CD8-positive, alpha-beta T cell (primary cell): ENCODE measurements at regions of chr1 and their contacts with region 1.

Region 1: DNA sequence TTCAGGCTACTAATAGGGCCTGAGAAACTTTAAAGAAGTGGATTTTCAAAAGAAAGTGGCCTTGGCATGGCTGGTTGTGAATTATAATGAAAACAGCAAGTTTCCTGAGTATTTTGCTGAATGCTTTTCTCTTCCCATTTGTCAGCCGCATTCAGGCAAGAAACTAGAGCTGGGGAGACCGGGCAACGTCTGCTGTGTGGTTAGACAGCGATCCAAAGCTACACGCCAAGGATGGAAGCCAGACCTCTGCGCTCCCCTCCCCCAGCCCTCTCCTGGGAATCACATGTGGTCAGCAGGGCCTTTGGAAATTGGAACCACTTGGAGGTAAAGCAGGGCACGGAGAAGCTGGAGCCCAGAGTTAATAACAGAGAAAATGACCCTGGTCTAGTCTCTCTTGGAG is 114.1 kb upstream of the CD34 start:
- DNase-seq: no peak
- ATAC-seq: no peak
- H3K4me3 ChIP-seq: no peak overlapping the region
- H3K4me3 Mint-ChIP-seq: no peak overlapping the region
- H3K27ac ChIP-seq: no peak overlapping the region
- H3K27ac Mint-ChIP-seq: no peak overlapping the region
- H3K4me1 ChIP-seq: no peaks in the 10 kb centered on the region
- H3K4me1 Mint-ChIP-seq: no peaks in the 10 kb centered on the region
- H3K27me3 ChIP-seq: no peaks in the 10 kb centered on the region
- H3K27me3 Mint-ChIP-seq: no peaks in the 10 kb centered on the region
- CTCF ChIP-seq: no peak

Region 2: DNA sequence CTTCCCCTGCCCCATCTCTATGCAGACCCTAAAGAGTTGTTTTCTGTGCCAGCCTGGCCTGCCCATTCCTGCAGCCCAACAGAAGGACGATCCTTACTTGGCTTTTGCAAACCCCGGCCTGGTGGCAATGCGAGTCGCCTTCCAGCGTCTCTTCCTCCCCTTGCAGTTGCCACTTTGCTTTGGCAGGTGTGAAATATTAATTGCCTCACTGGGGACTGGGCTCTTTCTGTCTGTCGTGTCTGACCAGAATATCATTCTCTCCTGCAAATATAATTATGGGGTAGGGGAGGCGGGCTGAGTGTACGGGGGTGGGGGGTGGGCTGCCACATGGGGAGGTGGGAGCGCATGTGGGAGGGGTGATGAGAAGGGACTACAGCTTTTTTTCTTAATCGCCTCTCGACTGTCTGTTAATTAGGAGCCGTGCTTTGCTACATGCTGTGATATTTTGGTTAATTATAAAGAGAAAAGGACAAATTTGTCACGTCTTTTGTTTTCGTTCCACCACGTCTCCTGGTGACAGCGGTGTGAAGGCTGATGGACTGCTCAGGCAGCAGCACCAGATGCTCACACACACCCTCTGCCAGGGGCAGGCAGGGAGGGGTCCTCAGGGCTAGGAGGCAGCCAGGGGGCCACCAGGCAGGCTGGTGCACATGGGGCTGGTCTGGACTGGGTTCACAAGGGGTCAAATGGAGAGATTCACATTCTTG is 34.0 kb before region 1 on chr1:
- CTCF ChIA-PET with region 1: interaction called, 7 read pairs
- POLR2A ChIA-PET with region 1: no interaction called
- intact Hi-C with region 1: loop called in 1 of 2 experiments (anchors 1 kb)
- DNase-seq: no peak
- ATAC-seq: no peak
- H3K4me3 ChIP-seq: no peak overlapping the region
- H3K4me3 Mint-ChIP-seq: no peak overlapping the region
- H3K27ac ChIP-seq: no peak overlapping the region
- H3K27ac Mint-ChIP-seq: no peak overlapping the region
- H3K4me1 ChIP-seq: no peaks in the 10 kb centered on the region
- H3K4me1 Mint-ChIP-seq: no peaks in the 10 kb centered on the region
- H3K27me3 ChIP-seq: no peaks in the 10 kb centered on the region
- H3K27me3 Mint-ChIP-seq: peaks cover 22% of the 10 kb centered on the region
- CTCF ChIP-seq: no peak

Region 3: DNA sequence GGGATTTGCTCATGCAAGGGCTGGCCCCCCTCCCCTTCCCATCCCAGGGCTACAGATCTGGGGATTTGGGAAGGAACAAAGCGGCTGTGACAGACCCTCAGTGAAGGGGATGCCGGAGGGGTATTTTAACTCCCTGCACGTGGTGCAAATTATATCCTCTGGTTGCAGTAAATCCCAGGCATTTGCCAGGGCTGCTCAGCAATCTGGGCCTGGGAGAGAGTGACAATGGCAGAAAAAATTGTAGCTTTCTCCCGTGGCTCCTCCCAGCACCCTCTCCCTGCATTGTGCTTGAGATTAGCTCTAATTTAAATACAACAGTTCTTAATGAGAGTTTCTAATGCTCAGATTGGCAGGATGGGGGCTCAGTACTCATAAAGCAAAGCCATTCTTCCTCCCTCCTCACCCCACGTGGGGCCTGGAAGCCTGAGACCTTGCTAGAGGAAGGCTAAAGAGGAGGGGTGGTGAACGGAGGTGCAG is 15.8 kb after region 1 on chr1:
- CTCF ChIA-PET with region 1: interaction called, 19 read pairs
- POLR2A ChIA-PET with region 1: no interaction called
- intact Hi-C with region 1: no loop called
- DNase-seq: no peak
- ATAC-seq: no peak
- H3K4me3 ChIP-seq: no peak overlapping the region
- H3K4me3 Mint-ChIP-seq: no peak overlapping the region
- H3K27ac ChIP-seq: no peak overlapping the region
- H3K27ac Mint-ChIP-seq: no peak overlapping the region
- H3K4me1 ChIP-seq: no peaks in the 10 kb centered on the region
- H3K4me1 Mint-ChIP-seq: no peaks in the 10 kb centered on the region
- H3K27me3 ChIP-seq: no peaks in the 10 kb centered on the region
- H3K27me3 Mint-ChIP-seq: peaks cover 4% of the 10 kb centered on the region
- CTCF ChIP-seq: no peak

Region 4: DNA sequence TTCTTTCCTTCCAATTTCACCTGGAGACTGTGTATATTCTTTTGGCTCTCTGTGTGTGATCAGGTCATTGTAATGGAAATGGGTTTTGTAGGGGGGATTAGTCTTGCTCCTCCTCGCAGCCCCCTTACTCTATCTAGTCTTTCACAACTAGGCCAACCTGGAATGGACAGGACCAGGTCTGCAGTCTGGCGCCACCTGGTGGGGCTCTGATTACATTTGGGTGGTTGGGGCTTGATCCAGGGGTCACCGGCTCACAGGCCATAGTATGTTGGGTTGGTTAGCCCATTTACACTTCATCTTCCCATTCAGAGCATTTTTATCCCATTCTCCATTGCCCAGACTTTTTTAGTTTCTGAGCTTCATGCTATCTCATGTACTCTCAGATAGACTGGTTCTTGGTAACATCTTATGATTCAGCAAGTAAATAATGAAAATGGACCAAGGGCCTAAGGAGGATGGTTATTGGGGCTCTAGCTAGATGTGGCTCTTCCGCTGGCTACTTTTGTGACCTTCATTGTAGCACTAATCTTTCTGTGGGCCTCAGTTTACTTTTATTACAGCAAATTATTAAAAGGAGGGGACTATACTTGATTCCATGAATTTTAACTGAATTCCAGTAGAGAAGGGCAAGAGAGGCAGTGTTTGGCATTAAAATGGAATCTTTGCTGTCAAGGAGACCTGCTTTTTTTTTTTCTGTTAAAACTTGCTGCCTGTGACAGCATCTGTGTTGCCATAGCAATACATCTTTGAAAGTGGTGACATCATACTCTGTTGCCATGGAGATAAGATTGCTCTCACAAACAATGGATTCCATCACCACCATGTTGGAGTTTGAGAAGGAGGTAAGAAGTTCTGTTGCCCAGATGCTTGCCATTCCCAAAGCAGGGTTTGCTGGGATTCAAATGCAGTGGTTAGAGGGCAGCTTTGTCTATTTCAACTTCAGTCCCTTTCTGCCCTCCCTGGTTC is 69.0 kb after region 1 on chr1:
- CTCF ChIA-PET with region 1: interaction called, 95 read pairs
- POLR2A ChIA-PET with region 1: no interaction called
- intact Hi-C with region 1: loop called (anchors 1 kb)
- DNase-seq: peak; percentile 21 to 68 (median 58)
- ATAC-seq: peak; percentile 23
- H3K4me3 ChIP-seq: no peak overlapping the region
- H3K4me3 Mint-ChIP-seq: no peak overlapping the region
- H3K27ac ChIP-seq: no peak overlapping the region
- H3K27ac Mint-ChIP-seq: no peak overlapping the region
- H3K4me1 ChIP-seq: no peaks in the 10 kb centered on the region
- H3K4me1 Mint-ChIP-seq: no peaks in the 10 kb centered on the region
- H3K27me3 ChIP-seq: no peaks in the 10 kb centered on the region
- H3K27me3 Mint-ChIP-seq: no peaks in the 10 kb centered on the region
- CTCF ChIP-seq: peak; percentile 64

Region 5: DNA sequence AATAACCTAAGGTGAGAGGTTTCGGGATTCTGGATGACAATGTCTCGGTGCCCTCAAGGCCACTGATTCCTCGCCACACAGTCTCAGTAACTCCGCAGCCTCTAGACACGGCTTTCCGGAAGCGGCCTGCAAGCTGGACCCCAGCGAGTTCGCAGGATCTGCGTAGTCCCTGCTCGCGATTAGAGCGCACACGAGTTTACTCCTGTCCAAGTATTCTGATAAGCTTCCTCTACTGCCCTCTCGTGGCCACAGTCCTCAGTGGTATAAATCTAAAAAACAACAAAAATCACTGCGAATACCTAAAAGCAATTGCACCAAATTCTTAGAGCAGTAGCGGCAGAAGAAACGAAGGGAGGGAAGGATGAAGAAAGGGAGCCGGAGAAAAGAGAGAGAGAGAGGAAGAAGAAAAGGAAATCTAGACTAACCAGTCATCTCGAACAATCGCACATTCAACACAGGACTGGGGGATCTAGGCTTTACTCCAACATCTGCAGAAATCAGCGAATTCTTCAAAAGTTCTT is 220.2 kb after region 1 on chr1:
- CTCF ChIA-PET with region 1: interaction called, 150 read pairs
- POLR2A ChIA-PET with region 1: interaction called, 21 read pairs
- intact Hi-C with region 1: loop called (anchors 1 kb)
- DNase-seq: peak; percentile 61 to 87 (median 77)
- ATAC-seq: peak; percentile 56
- H3K4me3 ChIP-seq: peak overlapping the region; percentile 71 to 78
- H3K4me3 Mint-ChIP-seq: peak overlapping the region; percentile 80
- H3K27ac ChIP-seq: peak overlapping the region; percentile 35 to 71
- H3K27ac Mint-ChIP-seq: peak overlapping the region; percentile 9
- H3K4me1 ChIP-seq: peaks cover 4% of the 10 kb centered on the region
- H3K4me1 Mint-ChIP-seq: peaks cover 6% of the 10 kb centered on the region
- H3K27me3 ChIP-seq: peaks cover 0 to 6% of the 10 kb centered on the region in 2 experiments
- H3K27me3 Mint-ChIP-seq: peaks cover 18% of the 10 kb centered on the region
- CTCF ChIP-seq: peak; percentile 76

Region 6: GRCh38 chr1:209106237-209106741 is 1081.3 kb after region 1 on chr1:
- CTCF ChIA-PET with region 1: no interaction called
- POLR2A ChIA-PET with region 1: no interaction called
- intact Hi-C with region 1: no loop called
- DNase-seq: no peak
- ATAC-seq: no peak
- H3K4me3 ChIP-seq: no peak overlapping the region
- H3K4me3 Mint-ChIP-seq: no peak overlapping the region
- H3K27ac ChIP-seq: no peak overlapping the region
- H3K27ac Mint-ChIP-seq: no peak overlapping the region
- H3K4me1 ChIP-seq: no peaks in the 10 kb centered on the region
- H3K4me1 Mint-ChIP-seq: no peaks in the 10 kb centered on the region
- H3K27me3 ChIP-seq: no peaks in the 10 kb centered on the region
- H3K27me3 Mint-ChIP-seq: peaks cover 7% of the 10 kb centered on the region
- CTCF ChIP-seq: no peak

Region 7: DNA sequence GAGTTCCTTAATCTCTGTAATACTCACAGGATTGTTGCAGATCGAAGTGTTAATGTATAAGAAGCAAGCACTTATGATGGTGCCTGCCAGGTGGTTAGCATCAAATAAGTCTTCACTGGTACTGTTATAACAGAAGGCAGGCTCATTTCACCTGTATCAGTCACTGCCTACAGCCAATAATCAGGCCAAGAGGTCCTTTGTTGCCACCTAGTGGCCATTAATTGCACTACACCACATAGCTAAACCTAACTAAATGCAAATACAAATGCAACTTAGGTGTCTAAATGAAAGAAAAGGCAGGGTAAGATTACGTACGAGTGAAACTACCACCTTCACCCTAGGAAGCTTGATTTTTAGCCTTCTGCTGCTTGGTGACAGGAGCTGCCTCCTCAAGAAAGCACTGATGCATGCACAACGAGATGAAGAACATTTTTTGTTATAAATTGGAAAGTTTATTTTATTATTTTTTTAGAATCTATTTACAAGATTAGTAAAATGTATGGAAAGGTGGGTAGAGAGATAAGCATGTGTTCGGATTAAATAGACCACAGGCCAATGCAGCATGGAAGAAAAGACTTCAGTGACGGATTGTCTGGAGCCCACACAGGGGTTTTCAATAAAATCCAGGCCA is 1223.7 kb after region 1 on chr1:
- CTCF ChIA-PET with region 1: interaction called, 3 read pairs
- POLR2A ChIA-PET with region 1: no interaction called
- intact Hi-C with region 1: loop called in 1 of 2 experiments (anchors 5 kb)
- DNase-seq: peak in 5 of 9 experiments; percentile 19 to 58 (median 32)
- ATAC-seq: no peak
- H3K4me3 ChIP-seq: no peak overlapping the region
- H3K4me3 Mint-ChIP-seq: no peak overlapping the region
- H3K27ac ChIP-seq: no peak overlapping the region
- H3K27ac Mint-ChIP-seq: no peak overlapping the region
- H3K4me1 ChIP-seq: no peaks in the 10 kb centered on the region
- H3K4me1 Mint-ChIP-seq: no peaks in the 10 kb centered on the region
- H3K27me3 ChIP-seq: no peaks in the 10 kb centered on the region
- H3K27me3 Mint-ChIP-seq: no peaks in the 10 kb centered on the region
- CTCF ChIP-seq: peak; percentile 93